ENCODE measurements at regions of chr4 and their contacts with region 1.

Region 1: DNA sequence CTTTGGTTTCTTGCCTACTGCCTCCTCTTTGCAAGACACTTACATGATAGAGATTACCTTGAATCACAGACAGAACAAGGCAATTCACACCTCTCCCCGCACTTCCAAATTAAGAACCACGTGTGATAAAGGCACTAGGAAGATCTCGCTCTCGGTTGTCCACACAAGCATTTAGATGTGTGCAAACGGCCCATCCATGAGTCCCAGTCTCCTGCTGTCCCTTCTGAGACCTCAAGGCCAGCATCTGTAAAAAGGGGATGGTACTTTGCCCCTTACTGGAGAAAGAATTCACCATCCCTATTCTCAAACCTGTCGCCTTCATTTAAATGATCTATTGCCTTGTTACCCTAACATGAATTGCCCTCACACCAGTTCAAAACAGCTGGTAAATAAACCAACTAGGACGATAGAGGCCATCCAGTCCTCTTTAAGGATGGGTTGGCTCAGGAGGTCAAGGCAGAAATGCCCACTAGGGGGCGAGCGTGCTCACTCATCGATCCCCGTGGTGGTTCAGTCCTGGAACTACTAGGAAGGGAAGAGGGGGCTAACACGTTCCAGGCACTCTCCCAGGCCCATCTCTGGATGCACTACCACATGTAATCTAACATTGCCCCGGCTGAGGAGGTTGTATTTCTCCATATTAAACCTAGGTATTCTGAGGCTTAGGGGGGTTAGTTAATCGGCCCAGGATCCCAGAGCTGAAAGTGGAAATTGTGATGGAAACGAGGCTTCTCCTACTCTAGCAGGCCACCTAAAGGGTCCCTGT is 95.8 kb downstream of the DHX15 start:
- DNase-seq: peak; percentile 78
- CTCF ChIP-seq: peak; percentile 89

Region 2: GRCh38 chr4:24476282-24476681 is 12.3 kb before region 1 on chr4:
- CTCF ChIA-PET with region 1: interaction called, 30 read pairs
- POLR2A ChIA-PET with region 1: no interaction called
- DNase-seq: peak; percentile 40
- CTCF ChIP-seq: peak; percentile 44